AG04450 (cell line): ENCODE measurements at regions of chr6 and their contacts with region 1.

Region 1: DNA sequence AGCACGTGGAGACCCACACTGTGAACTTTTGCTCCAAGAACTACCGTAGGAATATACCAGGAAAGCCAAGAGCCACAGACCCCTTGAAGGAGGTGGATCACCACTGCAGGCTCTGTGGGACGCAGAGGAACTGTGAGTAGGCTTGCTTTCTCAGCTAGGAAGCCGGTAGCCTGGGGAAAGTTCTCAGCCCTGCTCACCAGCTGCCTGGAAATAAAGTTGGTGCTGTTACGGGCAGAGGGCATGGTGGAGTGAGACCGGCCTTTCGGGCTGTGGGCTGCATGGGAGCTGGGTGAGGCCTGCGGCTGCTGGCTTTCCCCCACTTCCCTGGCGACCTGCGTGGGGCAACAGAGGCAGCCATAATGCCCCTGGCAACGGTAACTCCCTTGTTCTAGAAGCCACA is 373.0 kb upstream of the RUNX2 start:
- DNase-seq: no peak
- H3K4me3 ChIP-seq: no peak overlapping the region
- H3K27ac ChIP-seq: no peak overlapping the region
- H3K27me3 ChIP-seq: no peaks in the 10 kb centered on the region
- CTCF ChIP-seq: no peak

Region 2: DNA sequence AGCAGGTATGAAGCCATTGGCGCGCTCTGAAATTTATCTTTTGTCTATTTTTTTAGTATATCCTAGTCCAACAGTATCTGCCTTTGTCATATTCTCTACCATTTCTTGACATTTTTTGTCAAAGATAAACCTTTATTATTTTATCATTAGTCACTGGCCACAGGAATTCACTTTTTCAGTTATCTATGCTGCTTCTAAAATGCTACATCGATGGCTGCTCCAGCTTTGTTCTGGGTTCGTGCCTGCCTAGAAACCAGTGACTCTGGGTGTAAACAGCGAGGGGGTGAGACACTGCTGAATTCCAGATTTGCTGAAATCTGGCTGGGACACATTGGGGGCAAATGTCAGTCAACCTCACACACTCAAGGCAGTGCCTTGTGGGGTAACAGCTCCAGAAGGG is 374.2 kb before region 1 on chr6:
- CTCF ChIA-PET with region 1: no interaction called
- POLR2A ChIA-PET with region 1: no interaction called
- DNase-seq: peak; percentile 6
- H3K4me3 ChIP-seq: no peak overlapping the region
- H3K27ac ChIP-seq: no peak overlapping the region
- H3K27me3 ChIP-seq: peaks cover 24% of the 10 kb centered on the region
- CTCF ChIP-seq: no peak

Region 3: DNA sequence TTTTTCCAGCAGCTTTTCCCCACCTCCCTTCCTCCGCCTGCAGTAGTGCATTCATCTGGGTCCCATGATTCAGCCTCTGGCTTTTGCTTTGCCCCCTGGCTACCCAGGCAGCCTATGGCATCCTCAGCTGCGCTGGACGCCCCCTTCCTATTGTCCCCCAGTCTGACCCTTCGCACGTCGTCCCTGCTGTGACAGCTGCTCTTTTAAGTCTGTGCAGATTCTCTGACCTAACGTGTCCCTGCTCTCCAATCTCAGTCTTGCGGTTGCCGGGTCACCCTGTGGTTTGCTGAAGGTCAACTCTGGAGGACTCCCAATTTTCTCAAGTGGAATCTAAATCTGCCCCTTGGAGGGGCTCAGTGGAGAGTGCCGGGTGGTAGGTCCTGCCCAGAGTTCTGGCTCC is 273.4 kb before region 1 on chr6:
- CTCF ChIA-PET with region 1: no interaction called
- POLR2A ChIA-PET with region 1: no interaction called
- DNase-seq: no peak
- H3K4me3 ChIP-seq: no peak overlapping the region
- H3K27ac ChIP-seq: no peak overlapping the region
- H3K27me3 ChIP-seq: peaks cover 21% of the 10 kb centered on the region
- CTCF ChIP-seq: no peak

Region 4: DNA sequence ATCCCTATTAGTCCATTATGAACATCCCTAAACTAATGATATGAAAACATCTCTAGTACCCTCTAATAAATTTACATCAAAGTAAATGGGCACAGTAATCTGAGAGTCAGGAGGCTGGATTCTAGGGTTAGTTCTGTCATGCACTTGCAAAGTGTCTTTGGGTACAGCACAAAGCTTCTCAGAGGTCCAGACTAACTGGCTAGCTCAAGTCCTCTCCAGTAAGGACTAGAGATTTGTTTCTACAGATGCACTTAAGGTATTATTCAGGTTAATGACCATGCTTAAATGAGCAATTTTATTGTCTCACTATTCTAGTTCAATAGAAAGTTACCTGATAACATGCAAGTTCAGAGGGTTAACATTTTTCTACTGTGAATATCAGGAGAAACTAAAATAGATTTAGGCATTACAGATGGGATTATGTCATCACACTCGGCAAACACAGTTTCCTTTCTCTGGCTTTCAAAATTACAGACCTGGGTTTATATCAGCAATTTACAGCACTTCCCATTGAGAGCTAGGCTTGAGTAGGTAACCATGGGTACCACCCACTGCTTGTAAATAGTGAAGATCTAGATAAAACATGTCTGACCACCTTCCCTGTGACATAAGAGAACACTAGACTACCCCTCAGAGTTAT is 29.9 kb before region 1 on chr6:
- CTCF ChIA-PET with region 1: no interaction called
- POLR2A ChIA-PET with region 1: interaction called, 14 read pairs
- DNase-seq: no peak
- H3K4me3 ChIP-seq: no peak overlapping the region
- H3K27ac ChIP-seq: no peak overlapping the region
- H3K27me3 ChIP-seq: no peaks in the 10 kb centered on the region
- CTCF ChIP-seq: no peak

Region 5: DNA sequence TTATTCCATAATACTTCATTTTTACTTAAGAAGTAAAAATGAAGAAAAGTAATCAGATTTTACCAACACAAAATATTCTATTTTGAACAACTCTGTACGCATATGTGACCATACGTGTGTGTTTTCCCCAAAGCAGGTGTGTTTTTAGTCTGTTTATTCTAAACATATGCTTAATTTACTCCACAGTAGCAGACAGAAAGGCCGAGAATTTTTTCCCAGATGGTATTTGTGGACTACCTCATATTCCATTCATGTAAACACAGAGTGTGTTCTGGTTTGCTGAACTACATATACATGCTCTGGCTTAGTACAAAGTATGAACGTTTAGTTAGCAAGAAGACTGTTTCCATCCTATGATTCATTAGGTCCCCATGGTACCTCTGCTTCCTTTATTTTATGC is 139.7 kb after region 1 on chr6:
- CTCF ChIA-PET with region 1: no interaction called
- POLR2A ChIA-PET with region 1: no interaction called
- DNase-seq: no peak
- H3K4me3 ChIP-seq: no peak overlapping the region
- H3K27ac ChIP-seq: no peak overlapping the region
- H3K27me3 ChIP-seq: no peaks in the 10 kb centered on the region
- CTCF ChIP-seq: no peak